ENCODE measurements at regions of chr22 and their contacts with region 1.

Region 1: GRCh38 chr22:43346521-43346929 is 3.4 kb upstream of the SCUBE1 start:
- DNase-seq: peak; percentile 54
- H3K4me3 Mint-ChIP-seq: no peak overlapping the region
- H3K27ac Mint-ChIP-seq: no peak overlapping the region
- H3K4me1 Mint-ChIP-seq: peaks cover 9% of the 10 kb centered on the region
- H3K27me3 Mint-ChIP-seq: peaks cover 24% of the 10 kb centered on the region

Region 2: GRCh38 chr22:43230971-43231723 is 115.4 kb before region 1 on chr22:
- intact Hi-C with region 1: loop called (anchors 1 kb)
- DNase-seq: peak; percentile 61
- H3K4me3 Mint-ChIP-seq: no peak overlapping the region
- H3K27ac Mint-ChIP-seq: no peak overlapping the region
- H3K4me1 Mint-ChIP-seq: peaks cover 6% of the 10 kb centered on the region
- H3K27me3 Mint-ChIP-seq: peaks cover 6% of the 10 kb centered on the region

Region 3: GRCh38 chr22:43273902-43274484 is 72.5 kb before region 1 on chr22:
- intact Hi-C with region 1: loop called (anchors 1 kb)
- DNase-seq: peak; percentile 21
- H3K4me3 Mint-ChIP-seq: no peak overlapping the region
- H3K27ac Mint-ChIP-seq: no peak overlapping the region
- H3K4me1 Mint-ChIP-seq: peaks cover 11% of the 10 kb centered on the region
- H3K27me3 Mint-ChIP-seq: peaks cover 2% of the 10 kb centered on the region

Region 4: DNA sequence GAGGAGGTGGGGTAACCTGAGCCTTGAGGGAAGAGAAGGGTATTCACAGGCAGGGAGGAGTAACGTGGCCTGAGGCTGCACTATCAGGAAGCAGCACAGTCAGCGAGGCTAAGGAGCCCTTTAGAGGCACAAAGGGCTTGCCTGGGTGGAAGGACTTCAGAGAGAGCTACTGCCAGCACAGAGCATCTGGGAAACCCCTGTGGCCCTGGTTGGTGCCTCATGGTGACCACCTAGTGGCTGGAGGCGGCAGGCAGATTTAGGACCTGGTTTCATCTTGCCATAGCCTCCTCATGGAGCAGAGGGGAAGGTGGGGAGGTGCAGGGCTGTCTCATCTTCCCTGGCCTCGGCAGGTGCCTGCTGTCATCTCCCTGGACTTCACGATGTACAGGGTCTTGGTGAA is 129.8 kb after region 1 on chr22:
- intact Hi-C with region 1: no loop called
- DNase-seq: no peak
- H3K4me3 Mint-ChIP-seq: no peak overlapping the region
- H3K27ac Mint-ChIP-seq: no peak overlapping the region
- H3K4me1 Mint-ChIP-seq: peaks cover 4% of the 10 kb centered on the region
- H3K27me3 Mint-ChIP-seq: no peaks in the 10 kb centered on the region